IMR-90 (cell line): ENCODE measurements at regions of chr1 and their contacts with region 1.

Region 1: GRCh38 chr1:229258031-229258756 is 12.7 kb upstream of the RAB4A start:
- DNase-seq: peak; percentile 72
- ATAC-seq: peak; percentile 90
- H3K4me3 ChIP-seq: no peak overlapping the region
- H3K27ac ChIP-seq: no peak overlapping the region
- H3K4me1 ChIP-seq: no peaks in the 10 kb centered on the region
- H3K27me3 ChIP-seq: peaks cover 5% of the 10 kb centered on the region; the same call in 1 of the 2 replicates
- CTCF ChIP-seq: peak; percentile 92
- POLR2A ChIP-seq: no peak
- RAD21 ChIP-seq: peak; percentile 91

Region 2: GRCh38 chr1:228664399-228664914 is 593.7 kb before region 1 on chr1:
- CTCF ChIA-PET with region 1: interaction called, 23 read pairs
- POLR2A ChIA-PET with region 1: no interaction called
- dilution Hi-C with region 1: no loop called
- in situ Hi-C with region 1: no loop called
- intact Hi-C with region 1: loop called (anchors 1 kb)
- DNase-seq: peak; percentile 50
- ATAC-seq: peak; percentile 66
- H3K4me3 ChIP-seq: no peak overlapping the region
- H3K27ac ChIP-seq: no peak overlapping the region
- H3K4me1 ChIP-seq: no peaks in the 10 kb centered on the region
- H3K27me3 ChIP-seq: peaks cover 7% of the 10 kb centered on the region; the same call in 1 of the 2 replicates
- CTCF ChIP-seq: peak; percentile 85
- POLR2A ChIP-seq: no peak
- RAD21 ChIP-seq: peak; percentile 89

Region 3: GRCh38 chr1:229341774-229342655 is 83.8 kb after region 1 on chr1:
- CTCF ChIA-PET with region 1: no interaction called
- POLR2A ChIA-PET with region 1: no interaction called
- dilution Hi-C with region 1: no loop called
- in situ Hi-C with region 1: no loop called
- intact Hi-C with region 1: loop called (anchors 5 kb)
- DNase-seq: peak; percentile 57
- ATAC-seq: peak; percentile 92
- H3K4me3 ChIP-seq: peak overlapping the region; percentile 78
- H3K27ac ChIP-seq: peak overlapping the region; percentile 77
- H3K4me1 ChIP-seq: peaks cover 2% of the 10 kb centered on the region; the same call in 1 of the 2 replicates
- H3K27me3 ChIP-seq: peaks cover 5% of the 10 kb centered on the region; the same call in 1 of the 2 replicates
- CTCF ChIP-seq: no peak
- POLR2A ChIP-seq: no peak
- RAD21 ChIP-seq: no peak

Region 4: DNA sequence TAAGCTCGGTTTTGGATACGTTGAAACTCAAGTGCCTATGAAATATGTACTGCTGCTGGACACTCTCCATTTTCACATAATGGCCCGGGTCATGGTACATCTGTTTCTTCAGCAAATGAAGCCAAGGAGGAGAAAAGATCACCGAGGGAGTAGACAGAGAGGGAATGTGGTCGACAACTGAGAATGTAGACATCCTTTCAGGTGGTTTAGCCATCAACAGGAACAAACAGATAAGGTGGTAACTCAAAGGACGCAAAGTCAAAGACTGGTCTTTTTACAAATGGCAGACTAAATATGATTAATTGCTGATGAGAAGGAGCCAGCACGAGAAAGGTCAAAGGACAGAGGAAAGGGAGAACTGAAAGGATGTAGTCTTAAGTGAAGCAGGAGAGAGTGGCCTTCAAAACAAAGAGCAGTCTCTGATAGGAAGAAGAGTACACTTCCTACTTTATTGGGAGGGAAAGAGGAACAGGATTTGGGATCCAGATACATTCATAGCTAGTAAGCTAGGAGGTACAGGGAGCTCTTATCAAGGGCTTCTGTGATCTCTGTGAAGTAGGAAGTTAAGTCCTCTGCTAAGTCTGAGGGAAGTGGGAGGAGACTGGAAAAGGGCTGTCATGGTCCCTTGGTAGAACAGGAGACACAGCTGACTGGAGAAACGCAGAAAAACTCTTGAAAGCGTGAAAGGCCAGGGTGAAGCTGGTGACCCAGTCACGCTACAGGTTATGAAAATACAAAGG is 221.6 kb after region 1 on chr1:
- CTCF ChIA-PET with region 1: interaction called, 11 read pairs
- POLR2A ChIA-PET with region 1: no interaction called
- dilution Hi-C with region 1: loop called (anchors 25 kb)
- in situ Hi-C with region 1: loop called (anchors 5 kb)
- intact Hi-C with region 1: loop called (anchors 1 kb)
- DNase-seq: no peak
- ATAC-seq: no peak
- H3K4me3 ChIP-seq: no peak overlapping the region
- H3K27ac ChIP-seq: no peak overlapping the region
- H3K4me1 ChIP-seq: no peaks in the 10 kb centered on the region
- H3K27me3 ChIP-seq: no peaks in the 10 kb centered on the region
- CTCF ChIP-seq: no peak
- POLR2A ChIP-seq: no peak
- RAD21 ChIP-seq: no peak

Region 5: DNA sequence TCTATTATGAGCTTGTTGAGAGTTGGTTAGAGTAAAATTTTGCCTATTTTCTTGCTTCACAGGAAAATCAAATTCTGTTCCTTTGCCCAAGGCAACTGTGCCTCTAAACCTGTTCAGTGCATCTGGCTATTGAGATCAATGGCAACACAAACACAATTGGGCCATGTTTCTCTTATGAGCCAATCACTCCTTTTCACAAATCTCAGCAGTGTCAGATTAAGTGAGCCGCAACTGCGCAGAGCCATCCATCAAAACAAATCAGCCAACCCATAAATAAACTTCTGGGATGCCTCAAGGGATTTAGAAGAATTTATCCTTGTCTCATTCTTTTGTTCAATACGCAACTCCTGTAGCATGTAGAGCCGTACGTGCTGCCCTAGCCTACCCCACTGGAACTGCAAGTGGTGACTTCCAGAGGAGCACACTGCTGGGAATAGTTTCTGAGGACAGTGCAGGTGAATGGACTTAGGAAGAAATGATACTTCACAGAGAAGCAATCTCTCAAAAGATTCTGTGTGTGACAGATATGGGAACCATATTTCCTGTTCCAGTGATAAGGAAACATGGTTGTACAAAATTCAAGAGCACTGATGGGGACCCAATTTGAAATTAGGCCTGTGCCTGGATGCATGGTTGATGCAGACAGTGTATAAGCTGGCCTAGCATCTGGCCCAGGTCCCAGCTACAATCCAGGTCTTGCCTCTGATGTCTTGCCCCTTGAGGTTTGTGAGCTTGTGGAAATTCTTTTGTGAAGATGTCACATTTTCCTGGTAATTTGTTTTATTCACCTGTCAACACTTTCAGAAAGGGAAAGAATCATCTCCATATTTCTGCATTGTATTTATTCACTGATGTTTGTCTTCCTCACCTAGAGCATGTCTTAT is 534.1 kb after region 1 on chr1:
- CTCF ChIA-PET with region 1: no interaction called
- POLR2A ChIA-PET with region 1: no interaction called
- dilution Hi-C with region 1: no loop called
- in situ Hi-C with region 1: no loop called
- intact Hi-C with region 1: no loop called
- DNase-seq: no peak
- ATAC-seq: no peak
- H3K4me3 ChIP-seq: no peak overlapping the region
- H3K27ac ChIP-seq: no peak overlapping the region
- H3K4me1 ChIP-seq: no peaks in the 10 kb centered on the region
- H3K27me3 ChIP-seq: no peaks in the 10 kb centered on the region
- CTCF ChIP-seq: no peak
- POLR2A ChIP-seq: no peak
- RAD21 ChIP-seq: no peak

Region 6: GRCh38 chr1:230310381-230311163 is 1052.4 kb after region 1 on chr1:
- CTCF ChIA-PET with region 1: interaction called, 3 read pairs
- POLR2A ChIA-PET with region 1: no interaction called
- dilution Hi-C with region 1: no loop called
- in situ Hi-C with region 1: loop called (anchors 25 kb)
- intact Hi-C with region 1: loop called (anchors 10 kb)
- DNase-seq: peak; percentile 68
- ATAC-seq: peak; percentile 98
- H3K4me3 ChIP-seq: no peak overlapping the region
- H3K27ac ChIP-seq: no peak overlapping the region
- H3K4me1 ChIP-seq: no peaks in the 10 kb centered on the region
- H3K27me3 ChIP-seq: peaks cover 2% of the 10 kb centered on the region
- CTCF ChIP-seq: peak; percentile 92
- POLR2A ChIP-seq: peak; percentile 44
- RAD21 ChIP-seq: peak; percentile 96